Naive thymus-derived CD4-positive, alpha-beta T cell (primary cell): ENCODE measurements at regions of chr2 and their contacts with region 1.

Region 1: DNA sequence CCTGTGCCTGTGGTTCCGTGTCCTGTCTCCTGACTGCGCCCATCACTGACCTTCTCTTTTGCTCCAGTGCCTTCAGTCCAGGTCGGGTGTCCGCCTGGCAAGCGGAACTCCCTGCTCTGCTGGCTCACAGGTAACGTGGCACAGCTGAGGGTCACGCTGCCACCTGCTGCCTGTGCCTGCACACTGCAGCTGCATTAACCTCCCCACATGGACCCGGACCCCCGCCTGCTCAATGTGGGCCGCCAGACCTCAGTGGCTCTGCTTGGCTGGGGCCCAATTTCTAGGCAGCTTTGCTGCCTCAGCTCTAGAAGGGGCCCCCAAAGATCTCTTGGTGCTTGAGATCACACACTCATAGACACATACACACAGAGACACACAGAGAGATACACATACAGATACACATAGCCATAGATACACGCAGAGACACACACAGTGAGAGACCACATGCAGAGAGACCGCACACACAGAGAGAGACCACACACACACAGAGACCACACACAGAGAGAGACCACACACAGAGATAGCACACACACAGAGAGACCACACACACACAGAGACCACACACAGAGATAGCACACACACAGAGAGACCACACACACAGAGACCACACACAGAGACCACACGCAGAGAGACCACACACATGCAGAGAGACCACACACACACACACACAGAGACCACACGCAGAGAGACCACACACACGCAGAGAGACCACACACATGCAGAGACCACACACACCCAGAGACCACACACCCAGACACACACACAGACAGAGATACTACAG is 14.9 kb upstream of the CNNM3 start:
- DNase-seq: peak; percentile 41 to 72 (median 63)
- ATAC-seq: peak; percentile 94
- H3K4me3 ChIP-seq: no peak overlapping the region
- H3K4me3 Mint-ChIP-seq: no peak overlapping the region
- H3K27ac ChIP-seq: no peak overlapping the region
- H3K27ac Mint-ChIP-seq: no peak overlapping the region
- H3K4me1 ChIP-seq: peaks cover 10 to 20% of the 10 kb centered on the region in 2 donors
- H3K4me1 Mint-ChIP-seq: peaks cover under 1 to 4% (median 2%) of the 10 kb centered on the region in 7 donors
- H3K27me3 ChIP-seq: no peaks in the 10 kb centered on the region
- H3K27me3 Mint-ChIP-seq: no peaks in the 10 kb centered on the region

Region 2: GRCh38 chr2:96527286-96528005 is 273.7 kb before region 1 on chr2:
- CTCF ChIA-PET with region 1: no interaction called
- POLR2A ChIA-PET with region 1: no interaction called
- intact Hi-C with region 1: no loop called
- DNase-seq: peak in 5 of 9 donors; percentile 45 to 74 (median 46)
- ATAC-seq: peak; percentile 20
- H3K4me3 ChIP-seq: peak overlapping the region; percentile 77
- H3K4me3 Mint-ChIP-seq: peak overlapping the region; percentile 58 to 85 (median 83)
- H3K27ac ChIP-seq: peak overlapping the region; percentile 71
- H3K27ac Mint-ChIP-seq: peak overlapping the region; percentile 67 to 93 (median 87)
- H3K4me1 ChIP-seq: peaks cover 38 to 43% of the 10 kb centered on the region in 2 donors
- H3K4me1 Mint-ChIP-seq: peaks cover 32 to 90% (median 46%) of the 10 kb centered on the region in 7 donors
- H3K27me3 ChIP-seq: no peaks in the 10 kb centered on the region
- H3K27me3 Mint-ChIP-seq: no peaks in the 10 kb centered on the region

Region 3: DNA sequence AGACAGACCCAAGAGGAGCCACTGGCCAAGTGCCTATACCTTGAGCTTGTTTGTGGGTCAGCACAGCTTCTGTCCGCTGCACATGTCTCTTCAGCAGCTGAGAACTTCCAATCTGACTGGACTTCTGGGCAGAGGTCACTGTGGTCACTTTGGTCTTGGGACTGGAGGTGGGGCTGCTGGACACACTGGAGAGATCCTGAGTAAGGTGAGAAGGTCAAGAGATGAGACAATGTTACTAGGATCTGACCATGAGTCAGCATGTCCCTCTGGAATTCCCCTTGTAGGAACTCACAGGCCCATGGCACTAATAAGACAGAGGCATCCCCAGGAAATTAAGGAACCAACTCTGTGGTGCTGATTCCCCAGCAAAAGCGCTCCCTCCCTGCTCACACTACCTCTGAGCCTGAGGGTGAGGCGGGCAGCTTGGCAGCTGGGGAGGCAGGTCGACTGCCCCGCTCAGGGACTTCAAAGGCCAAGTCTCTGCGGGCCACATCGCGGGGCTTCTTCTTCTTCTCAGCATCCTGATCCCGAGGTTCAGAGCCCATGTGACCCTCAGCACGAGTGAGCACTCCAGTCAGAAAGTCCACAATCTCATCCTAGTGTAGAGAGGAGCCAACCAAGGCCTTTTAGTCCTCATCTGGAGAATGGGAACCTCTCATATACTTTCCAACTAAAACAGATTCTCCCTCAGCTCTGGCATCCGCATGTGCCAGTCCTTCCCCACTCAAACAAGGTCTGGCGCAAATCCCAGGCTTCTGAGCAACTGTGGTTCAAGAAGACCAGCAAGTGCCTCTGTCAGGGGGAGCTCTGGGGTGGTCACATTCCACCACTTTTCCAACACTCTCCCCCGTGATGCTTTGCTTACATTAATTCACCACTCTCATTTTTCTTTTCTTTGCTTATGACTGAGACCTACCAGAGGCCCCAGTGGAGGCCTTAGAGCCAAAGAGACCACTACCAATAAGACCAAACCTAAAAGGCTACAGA is 192.4 kb before region 1 on chr2:
- CTCF ChIA-PET with region 1: no interaction called
- POLR2A ChIA-PET with region 1: no interaction called
- intact Hi-C with region 1: loop called in 1 of 2 experiments (anchors 10 kb)
- DNase-seq: no peak
- ATAC-seq: no peak
- H3K4me3 ChIP-seq: no peak overlapping the region
- H3K4me3 Mint-ChIP-seq: no peak overlapping the region
- H3K27ac ChIP-seq: no peak overlapping the region
- H3K27ac Mint-ChIP-seq: peak overlapping the region in 1 of 9 donors; percentile 25
- H3K4me1 ChIP-seq: no peaks in the 10 kb centered on the region
- H3K4me1 Mint-ChIP-seq: peaks cover 0 to 9% (median 2%) of the 10 kb centered on the region in 7 donors
- H3K27me3 ChIP-seq: no peaks in the 10 kb centered on the region
- H3K27me3 Mint-ChIP-seq: no peaks in the 10 kb centered on the region

Region 4: DNA sequence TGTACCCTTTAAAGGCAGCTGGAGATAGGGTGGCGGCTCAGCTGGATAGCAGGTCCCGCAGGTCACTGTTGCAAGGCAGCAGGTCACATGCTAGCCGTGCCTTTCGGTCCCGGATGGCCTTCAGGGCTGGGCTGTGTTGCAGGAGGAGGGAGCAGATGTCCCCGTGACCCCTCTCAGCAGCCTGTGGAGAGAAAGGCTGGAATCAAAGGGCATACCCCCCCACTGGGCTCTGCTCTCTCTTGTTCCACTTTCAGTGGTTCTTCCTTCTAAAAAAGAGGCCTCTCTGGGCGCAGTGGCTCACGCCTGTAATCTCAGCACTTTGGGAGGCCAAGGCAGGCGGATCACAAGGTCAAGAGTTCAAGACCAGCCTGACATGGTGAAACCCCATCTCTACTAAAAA is 47.1 kb after region 1 on chr2:
- CTCF ChIA-PET with region 1: no interaction called
- POLR2A ChIA-PET with region 1: no interaction called
- intact Hi-C with region 1: no loop called
- DNase-seq: no peak
- ATAC-seq: no peak
- H3K4me3 ChIP-seq: no peak overlapping the region
- H3K4me3 Mint-ChIP-seq: no peak overlapping the region
- H3K27ac ChIP-seq: no peak overlapping the region
- H3K27ac Mint-ChIP-seq: peak overlapping the region in 1 of 9 donors; percentile 62
- H3K4me1 ChIP-seq: no peaks in the 10 kb centered on the region
- H3K4me1 Mint-ChIP-seq: peaks cover 0 to 12% (median 5%) of the 10 kb centered on the region in 7 donors
- H3K27me3 ChIP-seq: no peaks in the 10 kb centered on the region
- H3K27me3 Mint-ChIP-seq: no peaks in the 10 kb centered on the region